GM12878 (cell line): ENCODE measurements at regions of chr6 and their contacts with region 1.

Region 1: DNA sequence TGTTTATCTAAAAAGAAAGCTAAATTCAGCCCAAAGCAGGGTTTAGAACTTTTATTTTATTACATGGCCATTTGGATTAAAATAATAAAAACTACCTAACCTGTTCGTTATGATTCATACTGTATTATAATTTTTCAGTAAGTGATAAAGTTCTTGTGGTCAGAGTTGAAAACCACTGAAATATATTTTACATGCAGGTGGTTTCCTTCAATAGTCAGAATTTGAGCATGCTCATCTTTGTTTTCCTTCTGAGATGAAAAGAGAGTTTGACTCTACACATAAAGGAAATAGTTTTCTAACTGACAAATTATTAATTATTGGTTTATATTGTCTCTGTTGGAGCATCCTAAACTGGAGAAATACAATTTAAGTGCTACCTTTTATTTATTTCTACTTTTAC is 114.0 kb upstream of the FKBP1C start:
- DNase-seq: no peak
- ATAC-seq: peak; percentile 73
- H3K4me3 ChIP-seq: no peak overlapping the region
- H3K27ac ChIP-seq: no peak overlapping the region
- H3K4me1 ChIP-seq: peaks cover 7% of the 10 kb centered on the region; the same call in 1 of the 2 replicates
- H3K27me3 ChIP-seq: no peaks in the 10 kb centered on the region
- CTCF ChIP-seq: no peak
- EP300 ChIP-seq: peak; percentile 77 to 84; a peak in 3 of 4 replicates
- POLR2A ChIP-seq: no peak
- RAD21 ChIP-seq: no peak

Region 2: DNA sequence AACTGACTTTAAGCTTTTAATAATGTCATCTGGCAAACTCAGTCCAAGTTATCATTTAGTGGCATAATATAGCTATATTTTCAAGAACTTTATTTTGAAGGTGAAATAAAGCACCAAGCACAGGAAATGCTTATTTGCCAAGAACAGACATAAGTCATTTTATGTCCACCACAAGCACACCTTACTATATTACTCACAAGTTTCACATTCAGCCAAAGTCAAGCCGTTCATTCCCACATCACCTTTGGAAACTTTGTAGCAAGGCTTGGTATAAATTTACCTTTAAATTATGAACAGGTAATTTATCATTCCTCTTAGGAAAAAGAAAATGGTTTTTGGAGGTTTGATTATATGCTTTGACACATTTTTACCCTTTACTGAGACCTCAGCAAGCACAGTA is 122.8 kb before region 1 on chr6:
- CTCF ChIA-PET with region 1: interaction called, 7 read pairs
- POLR2A ChIA-PET with region 1: interaction called, 3 read pairs
- RAD21 ChIA-PET with region 1: interaction called, 24 read pairs
- SMC1A ChIA-PET with region 1: interaction called, 4 read pairs
- in situ Hi-C with region 1: no loop called
- intact Hi-C with region 1: loop called (anchors 5 kb)
- DNase-seq: no peak
- ATAC-seq: peak; percentile 81
- H3K4me3 ChIP-seq: no peak overlapping the region
- H3K27ac ChIP-seq: no peak overlapping the region
- H3K4me1 ChIP-seq: no peaks in the 10 kb centered on the region
- H3K27me3 ChIP-seq: no peaks in the 10 kb centered on the region
- CTCF ChIP-seq: no peak
- EP300 ChIP-seq: peak in 1 of 2 experiments; percentile 74; a peak in 1 of 4 replicates
- POLR2A ChIP-seq: no peak
- RAD21 ChIP-seq: no peak

Region 3: DNA sequence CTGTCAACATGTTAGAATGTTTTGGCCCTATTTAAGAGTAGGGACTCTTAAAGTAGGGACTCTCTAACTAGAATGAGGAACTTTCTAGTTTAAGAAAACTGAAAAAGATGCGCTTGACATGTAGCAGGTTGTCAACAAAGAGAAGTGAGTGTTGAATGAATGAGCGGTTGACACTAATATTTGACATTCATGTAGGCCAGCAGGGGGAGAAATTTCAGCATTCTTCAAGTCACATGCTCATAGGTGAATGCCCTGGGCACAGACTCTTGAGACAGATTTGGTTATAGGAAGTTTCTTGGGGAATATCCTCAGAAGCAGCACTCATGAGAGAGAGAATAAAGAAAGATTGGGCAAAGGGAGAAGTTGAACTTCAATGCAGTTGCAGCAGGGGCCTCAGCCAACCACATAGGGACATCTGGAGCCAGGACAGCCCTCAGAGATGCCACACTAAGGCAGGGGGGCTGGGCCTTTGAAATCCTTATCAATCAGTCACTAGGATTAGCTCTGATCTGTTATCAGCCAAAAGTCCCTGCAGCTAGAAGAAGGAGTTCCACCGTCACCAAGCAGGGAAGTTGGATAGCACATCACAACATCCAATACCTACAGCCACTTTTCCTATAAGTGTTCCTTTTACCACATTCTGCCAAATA is 31.0 kb before region 1 on chr6:
- CTCF ChIA-PET with region 1: no interaction called
- POLR2A ChIA-PET with region 1: no interaction called
- RAD21 ChIA-PET with region 1: no interaction called
- SMC1A ChIA-PET with region 1: interaction called, 7 read pairs
- in situ Hi-C with region 1: no loop called
- intact Hi-C with region 1: loop called (anchors 1 kb)
- DNase-seq: no peak
- ATAC-seq: peak; percentile 85
- H3K4me3 ChIP-seq: no peak overlapping the region
- H3K27ac ChIP-seq: no peak overlapping the region
- H3K4me1 ChIP-seq: no peaks in the 10 kb centered on the region
- H3K27me3 ChIP-seq: no peaks in the 10 kb centered on the region
- CTCF ChIP-seq: peak; percentile 29 to 48 (median 33); a peak in 5 of 6 replicates
- EP300 ChIP-seq: no peak
- POLR2A ChIP-seq: no peak
- RAD21 ChIP-seq: peak; percentile 43; the same call in 1 of the 2 replicates

Region 4: DNA sequence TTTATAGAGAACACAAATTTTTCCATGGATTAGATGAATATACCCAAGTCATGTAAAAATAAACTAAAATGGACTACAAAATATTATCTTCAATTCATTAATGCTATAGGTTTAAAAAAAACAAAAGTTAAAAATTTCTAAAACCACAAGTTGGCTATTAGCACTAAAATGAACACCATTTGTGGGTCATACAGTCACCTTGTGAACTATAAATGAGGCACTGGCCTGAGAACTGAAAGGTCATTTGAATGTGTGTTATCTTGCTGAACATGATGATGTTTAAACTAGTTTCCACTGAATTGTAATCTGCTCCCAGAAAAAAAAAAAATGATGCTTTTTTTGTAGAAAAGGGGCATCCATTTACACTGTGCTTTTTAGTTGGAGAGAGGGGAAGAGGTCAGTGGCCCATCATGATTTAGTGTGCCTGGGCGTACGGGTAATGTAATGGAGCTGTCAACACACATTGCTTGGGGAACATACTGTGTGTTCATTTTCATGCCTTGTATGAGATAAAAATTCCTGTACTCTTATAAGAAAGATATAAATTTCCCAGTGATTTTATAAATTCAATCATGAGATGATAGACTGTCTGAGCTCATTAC is 17.5 kb after region 1 on chr6:
- CTCF ChIA-PET with region 1: interaction called, 6 read pairs
- POLR2A ChIA-PET with region 1: interaction called, 5 read pairs
- RAD21 ChIA-PET with region 1: interaction called, 5 read pairs
- SMC1A ChIA-PET with region 1: interaction called, 34 read pairs
- in situ Hi-C with region 1: no loop called
- intact Hi-C with region 1: loop called (anchors 1 kb)
- DNase-seq: no peak
- ATAC-seq: peak; percentile 76
- H3K4me3 ChIP-seq: no peak overlapping the region
- H3K27ac ChIP-seq: no peak overlapping the region
- H3K4me1 ChIP-seq: no peaks in the 10 kb centered on the region
- H3K27me3 ChIP-seq: no peaks in the 10 kb centered on the region
- CTCF ChIP-seq: no peak
- EP300 ChIP-seq: peak; percentile 45 to 62; a peak in 2 of 4 replicates
- POLR2A ChIP-seq: no peak
- RAD21 ChIP-seq: no peak

Region 5: DNA sequence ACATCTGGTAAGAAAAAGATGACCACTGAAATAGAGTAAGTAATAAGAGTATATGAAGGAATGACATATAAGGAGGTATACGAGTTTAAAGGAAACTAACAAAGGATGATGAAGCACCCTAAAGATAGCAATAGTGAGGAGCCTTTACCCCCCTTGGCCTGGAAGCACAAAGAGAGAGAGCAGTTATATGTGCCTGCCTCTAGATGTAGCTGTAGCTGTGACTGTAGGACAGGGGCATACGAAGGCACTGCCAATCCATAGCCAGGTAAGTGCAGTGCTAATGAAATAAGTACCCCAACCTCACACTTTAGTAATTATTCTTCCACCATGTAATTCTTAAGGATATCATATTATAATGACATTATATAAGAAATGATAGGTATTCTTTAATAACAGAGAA is 23.9 kb after region 1 on chr6:
- CTCF ChIA-PET with region 1: interaction called, 6 read pairs
- POLR2A ChIA-PET with region 1: no interaction called
- RAD21 ChIA-PET with region 1: interaction called, 3 read pairs
- SMC1A ChIA-PET with region 1: interaction called, 34 read pairs
- in situ Hi-C with region 1: no loop called
- intact Hi-C with region 1: no loop called
- DNase-seq: no peak
- ATAC-seq: peak; percentile 72
- H3K4me3 ChIP-seq: no peak overlapping the region
- H3K27ac ChIP-seq: no peak overlapping the region
- H3K4me1 ChIP-seq: no peaks in the 10 kb centered on the region
- H3K27me3 ChIP-seq: no peaks in the 10 kb centered on the region
- CTCF ChIP-seq: peak in 2 of 3 experiments; percentile 17 to 26; a peak in 1 of 6 replicates
- EP300 ChIP-seq: no peak
- POLR2A ChIP-seq: no peak
- RAD21 ChIP-seq: no peak

Region 6: DNA sequence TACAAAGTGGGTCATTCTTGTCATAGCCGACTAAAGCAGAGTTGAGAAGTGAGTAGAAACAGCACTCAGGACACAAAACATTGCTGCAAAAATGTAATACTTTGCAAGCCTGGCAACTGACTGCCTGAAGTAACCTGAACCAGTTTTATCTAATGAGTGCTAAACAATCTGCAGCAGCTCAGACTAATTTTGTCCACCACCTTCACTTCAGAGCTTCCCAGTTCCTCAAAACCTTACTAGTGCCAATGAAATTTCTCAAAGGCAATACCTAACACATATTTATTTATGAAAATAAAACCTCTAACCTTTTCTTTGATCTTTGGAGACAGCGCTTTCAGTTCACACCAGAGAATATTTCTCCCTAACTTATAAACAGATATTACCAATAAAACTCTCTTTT is 57.3 kb after region 1 on chr6:
- CTCF ChIA-PET with region 1: interaction called, 3 read pairs
- POLR2A ChIA-PET with region 1: no interaction called
- RAD21 ChIA-PET with region 1: no interaction called
- SMC1A ChIA-PET with region 1: no interaction called
- in situ Hi-C with region 1: no loop called
- intact Hi-C with region 1: loop called (anchors 5 kb)
- DNase-seq: no peak
- ATAC-seq: peak; percentile 52
- H3K4me3 ChIP-seq: no peak overlapping the region
- H3K27ac ChIP-seq: no peak overlapping the region
- H3K4me1 ChIP-seq: no peaks in the 10 kb centered on the region
- H3K27me3 ChIP-seq: no peaks in the 10 kb centered on the region
- CTCF ChIP-seq: no peak
- EP300 ChIP-seq: no peak
- POLR2A ChIP-seq: no peak
- RAD21 ChIP-seq: no peak

Region 7: DNA sequence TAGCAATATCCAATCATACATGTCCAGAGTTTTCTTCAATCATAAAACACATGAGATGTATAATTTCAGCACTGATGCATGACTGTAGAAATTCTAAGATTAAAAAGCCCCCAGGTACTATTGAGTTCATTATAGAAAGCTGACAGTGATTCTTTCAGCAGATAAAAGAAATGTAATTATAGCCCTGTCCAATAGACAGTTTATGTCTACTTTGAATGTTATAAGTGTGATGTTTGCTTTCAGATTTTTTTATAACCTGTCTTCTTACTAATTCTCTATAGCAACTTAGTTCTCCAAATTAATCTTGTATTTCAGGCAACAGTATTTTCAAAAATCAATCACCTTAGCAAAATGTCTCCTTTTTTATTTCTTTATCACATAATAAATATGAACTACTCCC is 100.5 kb after region 1 on chr6:
- CTCF ChIA-PET with region 1: no interaction called
- POLR2A ChIA-PET with region 1: no interaction called
- RAD21 ChIA-PET with region 1: no interaction called
- SMC1A ChIA-PET with region 1: no interaction called
- in situ Hi-C with region 1: no loop called
- intact Hi-C with region 1: no loop called
- DNase-seq: no peak
- ATAC-seq: no peak
- H3K4me3 ChIP-seq: no peak overlapping the region
- H3K27ac ChIP-seq: no peak overlapping the region
- H3K4me1 ChIP-seq: no peaks in the 10 kb centered on the region
- H3K27me3 ChIP-seq: no peaks in the 10 kb centered on the region
- CTCF ChIP-seq: no peak
- EP300 ChIP-seq: no peak
- POLR2A ChIP-seq: no peak
- RAD21 ChIP-seq: no peak